ENCODE measurements at regions of chr17 and their contacts with region 1.

Region 1: DNA sequence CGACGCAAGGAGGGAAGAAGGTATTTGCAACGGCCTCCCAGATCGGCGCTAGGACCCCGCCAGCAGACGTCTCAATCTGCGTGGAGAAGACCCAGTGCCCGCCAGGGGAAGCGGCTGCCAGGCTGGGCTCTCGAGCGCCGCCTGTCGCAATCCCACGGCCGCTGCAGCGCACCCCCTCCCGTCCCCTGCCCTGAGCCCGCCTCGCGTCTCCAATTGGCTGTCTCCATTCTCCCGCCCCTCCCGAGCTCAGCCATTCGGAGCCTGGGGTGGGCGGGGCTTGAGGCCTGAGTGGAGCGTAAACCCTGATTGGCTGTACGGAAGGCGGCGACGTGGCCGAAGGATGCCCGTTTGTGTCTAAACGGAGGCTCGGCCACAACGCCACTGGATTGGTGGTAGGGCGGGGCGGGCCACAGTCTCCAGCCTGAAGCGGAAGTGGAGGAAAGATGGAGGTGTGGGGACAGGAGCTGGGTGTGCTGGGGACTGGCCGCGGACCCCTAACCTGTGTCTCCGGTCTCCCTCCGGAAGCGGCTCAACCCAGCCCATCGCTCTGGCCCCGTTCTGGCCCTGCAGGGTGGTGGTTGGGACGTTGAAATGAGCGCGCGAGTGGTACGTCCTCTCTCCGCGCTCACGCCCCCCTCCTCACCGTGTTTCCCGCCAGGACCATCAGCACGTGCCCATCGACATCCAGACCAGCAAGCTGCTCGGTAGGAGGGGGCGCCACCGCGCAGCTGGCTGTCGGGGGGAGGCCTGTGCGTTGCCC is at the start of gene CDK5RAP3:
- DNase-seq: peak; percentile 94 to 99 (median 97)
- ATAC-seq: peak; percentile 97 to 98
- H3K4me3 Mint-ChIP-seq: peak within 1 kb of the TSS; percentile 81 to 100 (median 98)
- H3K27ac Mint-ChIP-seq: peak within 1 kb of the TSS; percentile 80 to 97 (median 92)
- H3K4me1 Mint-ChIP-seq: peaks cover 20 to 32% (median 29%) of the 10 kb centered on the region in 4 donors
- H3K27me3 Mint-ChIP-seq: peaks cover 0 to 1% (median 0%) of the 10 kb centered on the region in 5 donors
- polyA plus RNA-seq, gene CDK5RAP3: 63.6 to 73.0 (median 70.2) TPM

Region 2: GRCh38 chr17:47941236-47941994 is 29.5 kb before region 1 on chr17 and contains the start of gene PNPO:
- POLR2A ChIA-PET with region 1: interaction called, 46 read pairs
- DNase-seq: peak; percentile 78 to 96 (median 92)
- ATAC-seq: peak; percentile 97
- H3K4me3 Mint-ChIP-seq: peak within 1 kb of the TSS; percentile 67 to 95 (median 91)
- H3K27ac Mint-ChIP-seq: peak within 1 kb of the TSS; percentile 68 to 97 (median 92)
- H3K4me1 Mint-ChIP-seq: peaks cover 31 to 63% (median 54%) of the 10 kb centered on the region in 4 donors
- H3K27me3 Mint-ChIP-seq: no peaks in the 10 kb centered on the region
- polyA plus RNA-seq, gene PNPO: 26.0 to 31.8 (median 29.9) TPM

Region 3: GRCh38 chr17:47949136-47949759 is 21.6 kb before region 1 on chr17:
- POLR2A ChIA-PET with region 1: interaction called, 46 read pairs
- DNase-seq: peak; percentile 48 to 89 (median 71)
- ATAC-seq: peak; percentile 65 to 77
- H3K4me3 Mint-ChIP-seq: peak overlapping the region; percentile 72 to 85 (median 78)
- H3K27ac Mint-ChIP-seq: peak overlapping the region; percentile 64 to 92 (median 87)
- H3K4me1 Mint-ChIP-seq: peaks cover 36 to 69% (median 53%) of the 10 kb centered on the region in 4 donors
- H3K27me3 Mint-ChIP-seq: no peaks in the 10 kb centered on the region